Common myeloid progenitor, CD34-positive (primary cell): ENCODE measurements at regions of chr5 and their contacts with region 1.

Region 1: DNA sequence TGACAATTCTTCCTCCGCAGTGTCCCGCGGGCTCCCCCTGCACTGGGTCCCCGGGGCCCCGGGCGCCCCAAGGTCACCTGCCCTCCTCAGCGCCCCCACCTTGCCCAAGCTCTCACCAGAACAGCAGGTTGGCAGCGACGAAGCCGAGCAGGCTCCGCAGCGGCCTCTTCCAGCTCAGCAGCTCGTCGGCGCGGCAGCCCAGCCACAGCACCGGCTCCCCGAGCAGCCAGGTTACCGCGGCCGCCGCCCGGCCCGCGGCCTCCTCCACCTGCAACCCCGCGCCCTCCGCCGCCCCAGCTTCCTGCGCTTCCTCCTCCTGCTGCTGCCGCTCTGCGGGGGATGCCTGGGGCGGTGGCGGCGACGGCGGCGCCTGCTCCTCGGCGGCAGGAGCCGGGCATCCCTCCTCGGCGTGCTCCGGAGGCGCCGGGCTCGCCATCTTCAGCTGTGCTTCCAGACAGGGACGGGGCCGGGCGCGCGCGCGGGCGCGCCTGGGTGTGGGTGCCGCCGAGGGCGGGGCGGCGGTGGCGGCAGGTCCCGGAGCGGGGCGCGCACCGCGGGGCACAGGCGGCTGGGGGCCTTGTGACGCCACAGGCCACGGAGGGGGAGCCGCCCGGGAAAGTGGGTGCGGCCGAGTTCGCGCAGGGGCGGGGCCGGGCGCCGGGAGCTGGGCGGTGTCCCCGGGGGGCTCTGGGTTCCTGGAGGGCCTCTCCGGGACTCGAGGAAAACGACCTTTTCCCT is at the start of gene RETREG1:
- DNase-seq: peak; percentile 48 to 83 (median 79)
- H3K4me3 ChIP-seq: peak within 1 kb of the TSS; percentile 55 to 83 (median 68)
- H3K27ac ChIP-seq: peak within 1 kb of the TSS in 1 of 2 experiments; percentile 69
- H3K4me1 ChIP-seq: peaks cover 5 to 25% (median 21%) of the 10 kb centered on the region in 4 experiments
- H3K27me3 ChIP-seq: peaks cover 0 to 5% (median 4%) of the 10 kb centered on the region in 5 experiments

Region 2: DNA sequence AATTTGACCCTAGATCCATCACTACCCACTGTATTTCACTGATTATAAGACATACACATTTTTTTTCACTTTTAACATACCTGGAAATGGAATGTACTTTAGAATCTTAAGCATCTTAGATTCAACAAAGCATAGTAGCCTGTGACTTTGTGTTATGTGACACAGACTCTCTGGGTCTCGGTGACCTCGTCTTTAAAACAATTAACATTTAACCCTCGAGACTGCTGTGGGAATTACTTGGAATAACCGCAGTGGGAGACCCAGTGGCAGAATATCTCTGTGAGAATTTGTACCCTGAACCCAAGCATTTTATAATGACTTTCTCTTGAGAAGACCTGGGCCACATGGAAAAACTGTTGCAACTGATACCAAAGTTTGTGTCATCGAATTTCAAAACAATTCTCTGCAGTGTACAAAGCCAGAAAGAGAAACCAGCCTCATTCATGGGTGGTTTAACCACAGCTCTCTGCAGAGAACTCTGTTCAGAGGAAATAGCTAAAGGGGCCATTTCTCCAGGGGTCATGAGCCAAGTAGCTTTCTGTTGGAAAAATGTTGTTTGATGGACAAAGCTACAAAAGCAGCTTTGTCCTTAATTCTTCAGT is 10.1 kb after region 1 on chr5:
- CTCF ChIA-PET with region 1: interaction called, 12 read pairs
- POLR2A ChIA-PET with region 1: interaction called, 3 read pairs
- DNase-seq: peak; percentile 13 to 74 (median 72)
- H3K4me3 ChIP-seq: no peak overlapping the region
- H3K27ac ChIP-seq: no peak overlapping the region
- H3K4me1 ChIP-seq: peaks cover 7 to 32% (median 14%) of the 10 kb centered on the region in 4 experiments
- H3K27me3 ChIP-seq: no peaks in the 10 kb centered on the region

Region 3: DNA sequence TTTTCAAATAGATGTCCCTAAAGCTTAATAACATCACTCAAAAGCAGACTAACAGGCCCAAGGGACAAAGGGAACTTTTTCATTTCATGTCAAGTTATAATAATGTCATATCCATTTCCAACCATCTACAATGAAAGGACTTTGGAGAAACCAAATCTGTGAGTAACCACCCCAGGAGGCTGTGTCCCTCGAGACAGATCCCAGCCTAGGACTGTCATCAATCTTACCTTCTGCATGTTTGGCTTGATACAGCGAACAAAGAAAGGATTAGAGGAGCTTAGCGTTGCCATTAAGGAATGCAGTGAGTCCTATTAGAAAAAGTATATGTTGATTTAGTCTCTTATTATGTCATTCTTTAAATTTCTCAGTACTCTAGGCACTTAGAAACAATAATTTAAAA is 137.9 kb after region 1 on chr5:
- CTCF ChIA-PET with region 1: no interaction called
- POLR2A ChIA-PET with region 1: no interaction called
- DNase-seq: no peak
- H3K4me3 ChIP-seq: no peak overlapping the region
- H3K27ac ChIP-seq: no peak overlapping the region
- H3K4me1 ChIP-seq: peaks cover 2 to 7% (median 6%) of the 10 kb centered on the region in 4 experiments
- H3K27me3 ChIP-seq: no peaks in the 10 kb centered on the region